Transverse colon (tissue), 4 donors: ENCODE measurements at regions of chr14 and their contacts with region 1.

Region 1: DNA sequence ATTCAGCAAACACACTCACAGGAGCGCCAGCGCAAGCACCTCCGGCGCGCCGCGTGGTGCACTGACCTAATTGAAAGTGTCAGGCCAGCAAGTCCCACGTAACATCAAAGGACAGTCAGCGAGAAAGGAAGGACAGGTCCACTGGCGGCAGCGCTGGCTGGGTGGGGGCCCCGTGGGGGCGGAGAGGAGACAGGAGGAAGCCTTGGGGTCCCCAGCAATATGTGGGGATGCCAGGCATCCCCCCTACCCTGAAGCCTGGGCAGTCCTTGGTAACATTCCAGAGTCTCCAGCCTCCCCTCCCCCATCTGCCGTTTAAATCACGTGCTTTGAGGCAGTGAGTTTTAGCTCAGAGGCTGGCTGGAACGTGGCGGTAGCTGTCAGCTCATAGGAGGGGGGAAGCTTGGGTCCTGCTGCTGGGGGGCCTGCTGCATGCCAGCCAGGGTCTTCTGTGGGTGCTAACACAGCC is 159.2 kb downstream of the CALM1 start:
- DNase-seq: peak; percentile 26
- H3K4me3 ChIP-seq: peak overlapping the region in 2 of 4 donors; percentile 15 to 24
- H3K27ac ChIP-seq: peak overlapping the region in 3 of 4 donors; percentile 48 to 75 (median 62)
- H3K4me1 ChIP-seq: peaks cover 0 to 14% (median 11%) of the 10 kb centered on the region in 4 donors
- H3K27me3 ChIP-seq: no peaks in the 10 kb centered on the region
- CTCF ChIP-seq: no peak
- EP300 ChIP-seq: no peak
- POLR2A ChIP-seq: no peak

Region 2: GRCh38 chr14:90677484-90678050 is 121.5 kb after region 1 on chr14:
- in situ Hi-C with region 1: no loop called
- intact Hi-C with region 1: loop called (anchors 10 kb)
- DNase-seq: no peak
- H3K4me3 ChIP-seq: no peak overlapping the region
- H3K27ac ChIP-seq: peak overlapping the region; percentile 51 to 78 (median 64)
- H3K4me1 ChIP-seq: peaks cover 3 to 28% (median 10%) of the 10 kb centered on the region in 4 donors
- H3K27me3 ChIP-seq: no peaks in the 10 kb centered on the region
- CTCF ChIP-seq: no peak
- EP300 ChIP-seq: peak; percentile 52
- POLR2A ChIP-seq: no peak